CD8-positive, alpha-beta memory T cell (primary cell): ENCODE measurements at regions of chr1 and their contacts with region 1.

Region 1: DNA sequence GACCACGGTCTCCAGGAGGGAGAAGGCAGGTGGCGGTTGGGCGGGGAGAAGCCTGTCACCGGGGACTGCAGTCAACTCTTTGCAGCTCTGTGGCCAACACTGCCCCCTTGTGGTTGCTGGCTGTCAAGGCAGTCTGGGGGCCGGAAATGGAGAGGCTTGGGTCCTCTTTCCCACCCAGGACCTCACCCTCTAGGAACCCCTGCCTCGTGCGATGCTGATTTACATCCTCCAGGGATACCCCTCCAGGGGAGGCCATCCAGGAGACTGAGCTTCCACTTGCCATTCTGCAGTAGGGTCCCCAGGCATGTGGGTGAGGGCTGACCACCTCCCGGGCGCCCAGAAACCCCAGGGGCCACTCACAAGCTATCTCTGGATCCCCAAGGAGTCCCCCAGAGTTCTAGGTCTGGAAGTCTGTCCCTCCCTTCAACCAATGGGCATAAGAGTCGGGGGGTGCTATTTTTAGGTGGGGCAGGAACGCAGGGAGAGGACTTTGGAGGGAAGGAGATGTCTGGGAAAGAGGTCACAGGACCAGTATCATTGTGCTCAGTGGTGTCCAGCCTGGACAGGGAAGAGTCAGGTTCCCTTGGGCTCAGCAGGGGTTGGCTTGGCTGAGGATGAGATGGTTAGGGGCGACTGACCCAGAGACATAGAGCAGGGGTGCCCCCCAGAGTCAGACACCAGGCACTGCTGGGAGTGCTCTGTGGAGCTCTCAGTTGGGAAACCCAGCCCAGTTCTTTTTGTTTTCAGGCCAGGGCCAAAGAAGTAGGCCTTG is 7.1 kb upstream of the GPR61 start:
- DNase-seq: peak; percentile 80 to 93 (median 87)
- H3K4me3 ChIP-seq: peak overlapping the region; percentile 49
- H3K4me3 Mint-ChIP-seq: peak overlapping the region; percentile 76 to 91 (median 86)
- H3K27ac ChIP-seq: peak overlapping the region; percentile 2
- H3K27ac Mint-ChIP-seq: peak overlapping the region; percentile 72 to 97 (median 87)
- H3K4me1 ChIP-seq: peaks cover 30% of the 10 kb centered on the region
- H3K4me1 Mint-ChIP-seq: peaks cover 19 to 23% (median 20%) of the 10 kb centered on the region in 3 donors
- H3K27me3 ChIP-seq: no peaks in the 10 kb centered on the region
- H3K27me3 Mint-ChIP-seq: peaks cover 0 to 2% of the 10 kb centered on the region in 2 donors

Region 2: DNA sequence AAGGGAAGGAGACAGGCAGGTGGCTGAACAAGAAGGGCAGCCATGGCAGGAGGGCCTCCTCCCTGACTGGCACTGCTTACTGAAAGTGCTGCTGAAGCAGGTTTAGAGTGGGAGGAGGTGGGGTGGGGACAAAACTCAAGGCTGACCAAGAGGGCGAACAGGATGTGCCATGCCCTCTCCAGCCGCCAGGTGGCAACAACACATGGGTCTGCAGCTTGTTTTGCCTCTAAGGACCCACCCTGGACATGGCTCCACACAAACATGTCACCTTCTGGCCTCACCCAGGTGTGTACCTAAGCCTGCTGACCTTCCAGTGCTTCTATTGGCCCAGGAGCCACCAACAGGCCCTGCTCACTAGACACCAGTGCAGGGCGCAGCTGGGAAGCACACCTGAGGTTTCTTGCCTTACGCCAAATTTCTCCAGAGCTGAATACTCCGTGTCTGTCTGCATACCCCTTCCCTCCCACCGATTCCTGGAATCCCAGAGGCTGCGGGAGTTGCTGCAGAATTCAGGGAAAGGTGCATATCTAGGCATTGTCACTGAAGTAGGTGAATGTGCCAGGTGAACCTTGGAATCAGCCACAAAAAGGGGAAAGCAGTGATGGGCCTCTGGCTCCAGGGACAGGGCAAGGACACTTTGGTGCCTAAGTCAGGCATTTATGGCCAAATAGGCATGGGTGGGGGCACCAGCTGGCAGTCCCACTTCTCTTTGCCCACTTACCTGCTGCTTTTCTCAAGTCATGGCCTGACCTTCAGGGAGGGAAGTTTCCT is 254.9 kb before region 1 on chr1:
- CTCF ChIA-PET with region 1: interaction called, 56 read pairs
- POLR2A ChIA-PET with region 1: interaction called, 3 read pairs
- DNase-seq: peak; percentile 37 to 67 (median 49)
- H3K4me3 ChIP-seq: no peak overlapping the region
- H3K4me3 Mint-ChIP-seq: no peak overlapping the region
- H3K27ac ChIP-seq: no peak overlapping the region
- H3K27ac Mint-ChIP-seq: peak overlapping the region in 2 of 8 donors; percentile 15 to 87
- H3K4me1 ChIP-seq: peaks cover 8% of the 10 kb centered on the region
- H3K4me1 Mint-ChIP-seq: peaks cover 5 to 12% (median 7%) of the 10 kb centered on the region in 3 donors
- H3K27me3 ChIP-seq: no peaks in the 10 kb centered on the region
- H3K27me3 Mint-ChIP-seq: no peaks in the 10 kb centered on the region

Region 3: DNA sequence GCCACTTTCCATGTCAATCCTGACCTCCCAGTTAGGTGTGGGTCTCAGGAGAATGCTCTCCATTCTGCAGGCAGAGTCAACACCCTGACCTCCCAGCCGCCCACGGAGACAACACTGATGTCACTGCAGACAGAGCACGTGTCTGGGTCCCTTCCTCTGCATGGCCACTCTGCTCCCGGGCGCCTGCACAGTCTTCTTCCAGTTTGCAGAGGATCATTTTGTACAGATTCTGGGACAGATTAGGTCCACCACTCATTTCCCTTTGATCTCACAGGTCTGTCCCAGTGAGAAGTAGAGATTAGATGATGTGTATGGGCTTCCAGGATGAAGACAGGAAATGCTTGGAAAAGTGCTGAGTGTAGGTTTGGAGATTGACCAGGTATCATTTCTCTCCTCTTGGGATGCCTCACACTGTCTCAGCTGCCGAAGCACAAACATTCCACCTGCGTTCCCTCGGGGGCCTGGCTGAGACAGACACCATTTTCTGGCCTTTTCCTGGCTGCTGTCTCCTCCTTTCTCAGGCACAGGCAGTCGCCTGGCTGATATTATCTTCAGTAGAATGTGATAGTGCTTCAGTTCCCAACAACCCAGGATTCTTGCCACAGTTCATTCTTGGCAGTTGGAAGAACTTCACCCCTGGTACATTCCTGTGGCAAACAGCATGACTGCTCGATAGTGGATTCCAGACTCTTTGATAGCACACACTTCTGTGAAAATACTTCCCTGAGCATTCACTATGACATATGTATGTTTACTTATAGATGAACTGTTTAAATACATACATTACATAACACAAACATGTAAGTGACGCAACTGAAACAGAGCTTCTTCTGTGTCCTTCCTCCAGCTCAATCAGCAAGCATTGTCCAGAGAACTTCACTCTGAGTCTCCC is 233.6 kb before region 1 on chr1:
- CTCF ChIA-PET with region 1: no interaction called
- POLR2A ChIA-PET with region 1: no interaction called
- DNase-seq: no peak
- H3K4me3 ChIP-seq: no peak overlapping the region
- H3K4me3 Mint-ChIP-seq: no peak overlapping the region
- H3K27ac ChIP-seq: no peak overlapping the region
- H3K27ac Mint-ChIP-seq: peak overlapping the region in 1 of 8 donors; percentile 54
- H3K4me1 ChIP-seq: no peaks in the 10 kb centered on the region
- H3K4me1 Mint-ChIP-seq: no peaks in the 10 kb centered on the region
- H3K27me3 ChIP-seq: no peaks in the 10 kb centered on the region
- H3K27me3 Mint-ChIP-seq: peaks cover 23 to 35% of the 10 kb centered on the region in 2 donors

Region 4: GRCh38 chr1:109397538-109398342 is 134.8 kb before region 1 on chr1 and contains the start of gene SORT1:
- CTCF ChIA-PET with region 1: interaction called, 21 read pairs
- POLR2A ChIA-PET with region 1: no interaction called
- DNase-seq: peak; percentile 38 to 78 (median 50)
- H3K4me3 ChIP-seq: peak within 1 kb of the TSS; percentile 30
- H3K4me3 Mint-ChIP-seq: peak within 1 kb of the TSS; percentile 77 to 92 (median 80)
- H3K27ac ChIP-seq: peak within 1 kb of the TSS; percentile 60
- H3K27ac Mint-ChIP-seq: peak within 1 kb of the TSS in 3 of 8 donors; percentile 41 to 67 (median 46)
- H3K4me1 ChIP-seq: peaks cover 10% of the 10 kb centered on the region
- H3K4me1 Mint-ChIP-seq: peaks cover 7 to 18% (median 15%) of the 10 kb centered on the region in 3 donors
- H3K27me3 ChIP-seq: peaks cover 24% of the 10 kb centered on the region
- H3K27me3 Mint-ChIP-seq: peaks cover 33 to 41% of the 10 kb centered on the region in 2 donors
- total RNA-seq, gene SORT1: 3.0 to 3.9 TPM

Region 5: DNA sequence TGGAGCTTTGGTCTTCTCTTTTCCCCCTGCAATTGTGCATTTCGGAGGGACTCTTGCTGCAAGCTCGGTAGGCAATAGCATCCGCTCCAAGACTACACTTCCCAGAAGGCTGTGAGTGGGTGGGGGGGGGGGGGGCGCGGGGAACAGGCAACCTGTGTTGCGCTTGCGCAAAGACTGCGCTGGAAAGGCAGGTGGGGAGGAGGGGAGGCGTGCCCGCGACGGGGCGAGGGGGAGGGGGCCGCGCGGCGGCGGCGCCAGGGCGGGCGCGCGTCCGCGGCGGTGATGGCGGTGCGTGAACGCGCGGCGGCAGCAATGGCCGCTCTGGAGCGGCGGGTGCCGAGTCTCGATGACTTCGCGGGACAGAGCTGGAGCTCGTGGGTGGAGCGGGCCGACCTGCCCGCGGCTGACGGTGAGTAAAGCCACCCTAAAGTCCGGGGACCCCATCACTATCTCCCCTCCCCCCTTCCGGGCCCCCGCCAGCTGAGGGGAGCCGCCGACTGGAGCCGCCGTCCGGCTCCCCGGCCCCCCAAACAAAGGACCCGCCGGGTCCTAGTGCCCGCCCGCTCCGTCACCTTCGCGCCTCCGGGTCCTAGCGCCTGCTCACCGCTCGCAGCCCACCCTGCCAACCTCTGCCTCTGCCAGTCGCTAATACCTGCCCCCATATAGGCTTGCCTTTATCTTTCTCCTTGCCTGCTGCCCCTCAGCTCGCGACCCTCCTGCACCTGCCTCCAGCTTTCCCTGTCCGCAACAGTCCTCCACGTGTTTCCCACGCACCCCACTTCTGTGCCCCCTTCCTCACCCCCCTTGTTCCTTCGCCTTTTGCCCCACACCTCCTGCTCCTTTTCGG is 48.7 kb before region 1 on chr1 and contains the start of gene ATXN7L2:
- CTCF ChIA-PET with region 1: interaction called, 1,339 read pairs
- POLR2A ChIA-PET with region 1: interaction called, 5 read pairs
- DNase-seq: peak; percentile 88 to 97 (median 92)
- H3K4me3 ChIP-seq: peak within 1 kb of the TSS; percentile 96
- H3K4me3 Mint-ChIP-seq: peak within 1 kb of the TSS; percentile 85 to 99 (median 94)
- H3K27ac ChIP-seq: peak within 1 kb of the TSS; percentile 79
- H3K27ac Mint-ChIP-seq: peak within 1 kb of the TSS; percentile 73 to 98 (median 94)
- H3K4me1 ChIP-seq: peaks cover 23% of the 10 kb centered on the region
- H3K4me1 Mint-ChIP-seq: peaks cover 19 to 39% (median 33%) of the 10 kb centered on the region in 3 donors
- H3K27me3 ChIP-seq: no peaks in the 10 kb centered on the region
- H3K27me3 Mint-ChIP-seq: peaks cover 3 to 7% of the 10 kb centered on the region in 2 donors
- total RNA-seq, gene ATXN7L2: 14.6 to 15.3 TPM

Region 6: GRCh38 chr1:109499661-109500536 is 32.7 kb before region 1 on chr1:
- CTCF ChIA-PET with region 1: interaction called, 1,339 read pairs
- POLR2A ChIA-PET with region 1: interaction called, 10 read pairs
- DNase-seq: peak; percentile 31 to 77 (median 56)
- H3K4me3 ChIP-seq: peak overlapping the region; percentile 5
- H3K4me3 Mint-ChIP-seq: peak overlapping the region; percentile 41 to 87 (median 63)
- H3K27ac ChIP-seq: no peak overlapping the region
- H3K27ac Mint-ChIP-seq: peak overlapping the region; percentile 85 to 97 (median 94)
- H3K4me1 ChIP-seq: peaks cover 96% of the 10 kb centered on the region
- H3K4me1 Mint-ChIP-seq: peaks cover 84 to 98% (median 94%) of the 10 kb centered on the region in 3 donors
- H3K27me3 ChIP-seq: no peaks in the 10 kb centered on the region
- H3K27me3 Mint-ChIP-seq: no peaks in the 10 kb centered on the region

Region 7: GRCh38 chr1:109516872-109517271 is 15.7 kb before region 1 on chr1:
- CTCF ChIA-PET with region 1: interaction called, 1,339 read pairs
- POLR2A ChIA-PET with region 1: no interaction called
- DNase-seq: no peak
- H3K4me3 ChIP-seq: no peak overlapping the region
- H3K4me3 Mint-ChIP-seq: no peak overlapping the region
- H3K27ac ChIP-seq: no peak overlapping the region
- H3K27ac Mint-ChIP-seq: peak overlapping the region in 1 of 8 donors; percentile 12
- H3K4me1 ChIP-seq: no peaks in the 10 kb centered on the region
- H3K4me1 Mint-ChIP-seq: no peaks in the 10 kb centered on the region
- H3K27me3 ChIP-seq: no peaks in the 10 kb centered on the region
- H3K27me3 Mint-ChIP-seq: peaks cover under 1 to 1% of the 10 kb centered on the region in 2 donors

Region 8: GRCh38 chr1:109589177-109589576 is 56.6 kb after region 1 on chr1:
- CTCF ChIA-PET with region 1: no interaction called
- POLR2A ChIA-PET with region 1: no interaction called
- DNase-seq: no peak
- H3K4me3 ChIP-seq: no peak overlapping the region
- H3K4me3 Mint-ChIP-seq: no peak overlapping the region
- H3K27ac ChIP-seq: no peak overlapping the region
- H3K27ac Mint-ChIP-seq: peak overlapping the region in 3 of 8 donors; percentile 15 to 77 (median 24)
- H3K4me1 ChIP-seq: no peaks in the 10 kb centered on the region
- H3K4me1 Mint-ChIP-seq: peaks cover 0 to 8% (median 0%) of the 10 kb centered on the region in 3 donors
- H3K27me3 ChIP-seq: no peaks in the 10 kb centered on the region
- H3K27me3 Mint-ChIP-seq: no peaks in the 10 kb centered on the region

Region 9: DNA sequence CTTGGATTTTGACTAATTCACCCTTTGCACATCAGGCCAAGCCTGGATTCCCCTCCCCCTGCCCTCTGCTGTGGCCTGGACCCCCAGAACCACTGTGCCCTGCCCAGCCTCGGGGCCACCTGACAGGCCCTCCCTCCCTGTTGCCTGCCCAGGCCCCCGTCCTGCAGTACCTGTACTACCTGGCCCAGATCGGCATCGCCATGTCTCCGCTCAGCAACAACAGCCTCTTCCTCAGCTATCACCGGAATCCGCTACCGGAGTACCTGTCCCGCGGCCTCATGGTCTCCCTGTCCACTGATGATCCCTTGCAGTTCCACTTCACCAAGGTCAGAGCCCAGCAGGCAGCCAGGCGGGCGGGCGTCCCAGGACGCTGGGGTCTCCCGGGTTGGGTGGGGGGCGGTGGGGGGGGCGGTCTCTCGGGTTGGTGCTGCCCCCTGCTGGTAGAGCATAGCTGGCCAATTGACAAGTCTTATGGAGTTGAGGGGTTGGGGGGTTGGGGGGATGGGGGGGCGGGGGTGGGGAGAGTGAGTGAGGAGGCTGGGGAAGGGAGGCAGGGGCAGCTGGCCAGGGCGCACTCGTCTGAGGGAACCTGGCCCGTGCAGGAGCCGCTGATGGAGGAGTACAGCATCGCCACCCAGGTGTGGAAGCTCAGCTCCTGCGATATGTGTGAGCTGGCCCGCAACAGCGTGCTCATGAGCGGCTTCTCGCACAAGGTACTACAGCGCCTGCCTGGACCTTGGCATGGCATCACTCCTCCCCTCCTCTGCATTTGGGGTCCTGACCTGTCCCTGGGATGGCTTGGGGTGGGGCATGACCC is 97.7 kb after region 1 on chr1:
- CTCF ChIA-PET with region 1: interaction called, 16 read pairs
- POLR2A ChIA-PET with region 1: no interaction called
- DNase-seq: peak in 2 of 5 donors; percentile 37 to 63
- H3K4me3 ChIP-seq: no peak overlapping the region
- H3K4me3 Mint-ChIP-seq: peak overlapping the region in 1 of 7 donors; percentile 70
- H3K27ac ChIP-seq: no peak overlapping the region
- H3K27ac Mint-ChIP-seq: peak overlapping the region in 4 of 8 donors; percentile 35 to 84 (median 58)
- H3K4me1 ChIP-seq: peaks cover 9% of the 10 kb centered on the region
- H3K4me1 Mint-ChIP-seq: peaks cover 7 to 12% (median 9%) of the 10 kb centered on the region in 3 donors
- H3K27me3 ChIP-seq: no peaks in the 10 kb centered on the region
- H3K27me3 Mint-ChIP-seq: no peaks in the 10 kb centered on the region